GM12878 (cell line): ENCODE measurements at regions of chr2 and their contacts with region 1.

Region 1: GRCh38 chr2:98692090-98693054 is 38.6 kb downstream of the MGAT4A start:
- DNase-seq: no peak
- ATAC-seq: peak; percentile 26; the same call in 2 of the 3 replicates
- H3K4me3 ChIP-seq: no peak overlapping the region
- H3K27ac ChIP-seq: no peak overlapping the region
- H3K4me1 ChIP-seq: no peaks in the 10 kb centered on the region
- H3K27me3 ChIP-seq: no peaks in the 10 kb centered on the region
- CTCF ChIP-seq: no peak
- EP300 ChIP-seq: no peak
- POLR2A ChIP-seq: no peak
- RAD21 ChIP-seq: no peak

Region 2: GRCh38 chr2:98664327-98664726 is 28.0 kb before region 1 on chr2:
- CTCF ChIA-PET with region 1: no interaction called
- POLR2A ChIA-PET with region 1: no interaction called
- RAD21 ChIA-PET with region 1: no interaction called
- SMC1A ChIA-PET with region 1: interaction called, 10 read pairs
- in situ Hi-C with region 1: no loop called
- intact Hi-C with region 1: no loop called
- DNase-seq: no peak
- ATAC-seq: no peak
- H3K4me3 ChIP-seq: no peak overlapping the region
- H3K27ac ChIP-seq: no peak overlapping the region
- H3K4me1 ChIP-seq: no peaks in the 10 kb centered on the region
- H3K27me3 ChIP-seq: no peaks in the 10 kb centered on the region
- CTCF ChIP-seq: no peak
- EP300 ChIP-seq: no peak
- POLR2A ChIP-seq: no peak
- RAD21 ChIP-seq: no peak